Activated CD4-positive, alpha-beta T cell treated with anti-CD3 and anti-CD28 coated beads for 36 hours (primary cell): ENCODE measurements at regions of chr2 and their contacts with region 1.

Region 1: GRCh38 chr2:203238704-203239526 is at the start of gene CYP20A1:
- DNase-seq: peak; percentile 99
- ATAC-seq: peak; percentile 84
- H3K4me3 Mint-ChIP-seq: peak within 1 kb of the TSS; percentile 93
- H3K27ac Mint-ChIP-seq: peak within 1 kb of the TSS; percentile 100
- H3K4me1 Mint-ChIP-seq: peaks cover 30% of the 10 kb centered on the region
- H3K27me3 Mint-ChIP-seq: no peaks in the 10 kb centered on the region
- total RNA-seq, gene CYP20A1: 19.0 to 23.3 TPM

Region 2: DNA sequence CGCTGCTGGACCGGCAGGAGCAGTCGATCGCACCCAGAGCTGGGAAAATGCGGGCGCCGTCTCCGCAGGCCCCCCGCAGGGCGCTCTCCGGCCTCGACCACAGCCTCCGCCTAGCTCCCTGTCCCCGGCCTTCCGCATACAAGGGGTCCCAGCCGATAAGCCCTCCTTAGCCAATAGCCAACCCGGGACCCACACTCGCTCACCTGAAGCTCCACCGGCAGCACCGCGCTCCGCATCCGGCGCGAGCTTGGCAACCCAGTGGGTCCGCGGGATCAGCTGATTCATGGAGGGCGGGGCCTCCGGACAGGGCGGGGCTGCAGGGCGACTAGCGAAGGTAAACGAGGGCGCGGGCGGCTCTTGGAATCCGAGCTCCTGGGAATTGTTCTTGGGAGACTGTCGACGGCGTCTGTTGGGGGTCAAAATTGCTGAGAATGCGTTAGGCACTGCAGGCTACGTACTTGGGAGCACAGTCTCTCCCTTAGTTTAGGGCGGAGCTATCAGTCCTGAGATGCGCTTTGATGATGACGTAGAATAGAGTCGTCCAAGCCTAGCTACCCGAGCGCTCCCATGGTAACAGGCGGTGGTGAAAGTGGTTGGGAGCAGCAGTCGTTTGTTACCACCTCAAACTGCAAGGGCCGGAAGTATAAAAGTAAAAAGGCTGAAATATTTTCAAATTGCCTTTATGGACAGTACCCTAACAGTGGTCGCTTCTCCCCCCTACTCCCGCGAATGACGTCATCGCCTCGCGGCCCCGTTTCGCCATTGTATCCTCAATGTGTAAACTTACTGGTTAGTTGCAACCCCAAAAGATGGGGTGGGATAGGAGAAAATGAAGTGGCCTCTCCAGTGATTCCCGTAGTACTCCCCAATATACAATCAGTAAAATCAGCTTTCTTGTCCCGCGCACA is 1458.0 kb before region 1 on chr2 and contains the start of gene ALS2:
- CTCF ChIA-PET with region 1: no interaction called
- POLR2A ChIA-PET with region 1: no interaction called
- intact Hi-C with region 1: loop called in 1 of 2 experiments (anchors 2 kb)
- DNase-seq: peak; percentile 96
- ATAC-seq: peak; percentile 95
- H3K4me3 Mint-ChIP-seq: peak within 1 kb of the TSS; percentile 84
- H3K27ac Mint-ChIP-seq: peak within 1 kb of the TSS; percentile 92
- H3K4me1 Mint-ChIP-seq: peaks cover 25% of the 10 kb centered on the region
- H3K27me3 Mint-ChIP-seq: peaks cover 7% of the 10 kb centered on the region
- total RNA-seq, gene ALS2: 12.3 to 12.4 TPM

Region 3: DNA sequence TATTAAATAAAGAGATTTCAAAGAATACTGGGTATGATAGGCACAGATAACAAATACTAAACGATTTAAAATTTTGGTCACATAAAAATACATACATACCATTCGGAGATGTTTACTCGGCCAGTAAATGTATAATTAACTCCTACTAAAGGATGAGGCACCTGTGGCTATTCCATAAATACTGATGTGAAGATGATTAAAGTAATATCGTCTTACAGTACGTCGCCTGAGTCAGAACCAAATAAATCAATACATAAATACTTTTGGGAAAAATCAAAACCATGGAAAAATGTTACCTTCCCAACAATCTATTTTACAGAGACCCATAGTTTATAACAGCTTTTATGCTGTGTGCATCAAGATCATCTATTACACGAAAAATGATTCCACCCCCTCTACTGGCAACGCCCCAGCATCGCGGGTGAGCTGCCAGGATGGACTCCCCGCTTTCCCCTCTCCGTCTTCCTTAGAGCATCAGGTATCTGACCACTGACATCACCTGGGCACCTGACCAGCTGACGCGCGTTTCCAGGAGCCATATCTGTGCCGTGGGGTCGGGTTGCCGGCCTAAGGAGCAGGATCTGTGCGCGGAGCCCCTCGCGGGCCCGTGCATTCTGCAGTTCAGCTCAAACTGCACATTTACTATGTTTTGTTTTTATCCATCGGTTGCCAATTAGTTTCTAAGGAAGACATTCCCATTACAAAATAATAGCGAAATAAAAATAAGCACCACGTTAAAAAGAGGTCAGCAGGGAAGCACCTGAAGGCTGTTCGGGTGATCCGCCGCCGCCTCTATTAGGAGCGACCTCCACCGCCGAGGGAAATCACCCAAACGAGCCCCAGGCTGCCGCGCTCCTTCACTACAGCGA is 368.2 kb before region 1 on chr2:
- CTCF ChIA-PET with region 1: no interaction called
- POLR2A ChIA-PET with region 1: no interaction called
- intact Hi-C with region 1: loop called in 1 of 2 experiments (anchors 2 kb)
- DNase-seq: peak; percentile 83
- ATAC-seq: peak; percentile 78
- H3K4me3 Mint-ChIP-seq: peak overlapping the region; percentile 90
- H3K27ac Mint-ChIP-seq: peak overlapping the region; percentile 80
- H3K4me1 Mint-ChIP-seq: peaks cover 11% of the 10 kb centered on the region
- H3K27me3 Mint-ChIP-seq: no peaks in the 10 kb centered on the region

Region 4: GRCh38 chr2:202911512-202912341 is 327.2 kb before region 1 on chr2 and contains the starts of genes CARF and WDR12:
- CTCF ChIA-PET with region 1: no interaction called
- POLR2A ChIA-PET with region 1: interaction called, 4 read pairs
- intact Hi-C with region 1: loop called (anchors 1 kb)
- DNase-seq: peak; percentile 96
- ATAC-seq: peak; percentile 84
- H3K4me3 Mint-ChIP-seq: peak within 1 kb of the TSS; percentile 84
- H3K27ac Mint-ChIP-seq: peak within 1 kb of the TSS; percentile 95
- H3K4me1 Mint-ChIP-seq: peaks cover 30% of the 10 kb centered on the region
- H3K27me3 Mint-ChIP-seq: no peaks in the 10 kb centered on the region
- total RNA-seq, gene CARF: 6.2 to 9.0 TPM
- total RNA-seq, gene WDR12: 92.5 to 129 TPM

Region 5: GRCh38 chr2:203209538-203209937 is 29.4 kb before region 1 on chr2:
- CTCF ChIA-PET with region 1: no interaction called
- POLR2A ChIA-PET with region 1: no interaction called
- intact Hi-C with region 1: no loop called
- DNase-seq: no peak
- ATAC-seq: no peak
- H3K4me3 Mint-ChIP-seq: no peak overlapping the region
- H3K27ac Mint-ChIP-seq: no peak overlapping the region
- H3K4me1 Mint-ChIP-seq: peaks cover 6% of the 10 kb centered on the region
- H3K27me3 Mint-ChIP-seq: no peaks in the 10 kb centered on the region

Region 6: GRCh38 chr2:203310688-203311448 is 72.0 kb after region 1 on chr2:
- CTCF ChIA-PET with region 1: no interaction called
- POLR2A ChIA-PET with region 1: no interaction called
- intact Hi-C with region 1: no loop called
- DNase-seq: no peak
- ATAC-seq: no peak
- H3K4me3 Mint-ChIP-seq: no peak overlapping the region
- H3K27ac Mint-ChIP-seq: no peak overlapping the region
- H3K4me1 Mint-ChIP-seq: no peaks in the 10 kb centered on the region
- H3K27me3 Mint-ChIP-seq: no peaks in the 10 kb centered on the region

Region 7: DNA sequence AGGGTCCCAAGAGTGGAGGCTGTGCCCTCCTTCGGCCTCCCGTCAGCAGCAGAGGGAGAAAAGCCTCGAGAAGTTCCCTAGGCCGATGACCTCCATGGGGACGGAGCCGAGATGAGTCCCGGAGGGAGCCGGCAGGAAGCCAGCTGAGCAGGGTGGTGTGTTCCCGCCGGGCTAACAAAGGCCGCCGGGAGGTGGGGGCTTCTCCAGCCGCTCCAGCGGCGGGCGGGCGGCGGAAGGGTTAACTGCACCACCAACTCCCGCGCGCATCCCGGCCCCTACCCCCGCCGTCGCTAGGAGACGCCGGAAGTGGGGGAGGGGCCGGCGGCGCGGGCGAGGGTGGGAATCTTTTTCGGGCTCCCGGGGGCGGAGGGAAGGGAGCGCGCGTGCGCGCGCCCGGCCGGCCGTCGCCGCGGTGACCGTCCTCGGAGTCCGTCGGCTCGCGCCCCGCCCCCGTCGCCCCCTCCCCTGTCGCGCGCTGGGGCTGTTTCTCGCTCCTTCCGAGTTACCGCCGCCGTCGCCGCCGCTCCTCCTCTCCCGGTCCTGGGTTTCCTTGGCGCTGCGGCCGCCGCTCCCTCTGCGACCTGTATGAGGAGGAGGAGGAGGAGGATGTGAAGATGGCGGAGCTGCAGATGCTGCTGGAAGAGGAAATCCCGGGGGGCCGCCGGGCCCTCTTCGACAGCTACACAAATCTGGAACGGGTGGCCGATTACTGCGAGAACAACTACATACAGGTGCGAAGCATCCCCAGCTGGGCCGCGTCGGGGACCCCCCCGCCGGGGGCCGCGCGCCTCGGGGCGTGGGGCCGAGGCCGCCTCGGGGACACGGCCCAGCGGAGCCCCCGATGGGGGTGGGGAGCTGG is 89.2 kb after region 1 on chr2 and contains the start of gene ABI2:
- CTCF ChIA-PET with region 1: interaction called, 3 read pairs
- POLR2A ChIA-PET with region 1: no interaction called
- intact Hi-C with region 1: loop called (anchors 1 kb)
- DNase-seq: peak; percentile 77
- ATAC-seq: peak; percentile 52
- H3K4me3 Mint-ChIP-seq: peak within 1 kb of the TSS; percentile 91
- H3K27ac Mint-ChIP-seq: peak within 1 kb of the TSS; percentile 84
- H3K4me1 Mint-ChIP-seq: peaks cover 31% of the 10 kb centered on the region
- H3K27me3 Mint-ChIP-seq: no peaks in the 10 kb centered on the region
- total RNA-seq, gene ABI2: 40.6 to 57.6 TPM

Region 8: DNA sequence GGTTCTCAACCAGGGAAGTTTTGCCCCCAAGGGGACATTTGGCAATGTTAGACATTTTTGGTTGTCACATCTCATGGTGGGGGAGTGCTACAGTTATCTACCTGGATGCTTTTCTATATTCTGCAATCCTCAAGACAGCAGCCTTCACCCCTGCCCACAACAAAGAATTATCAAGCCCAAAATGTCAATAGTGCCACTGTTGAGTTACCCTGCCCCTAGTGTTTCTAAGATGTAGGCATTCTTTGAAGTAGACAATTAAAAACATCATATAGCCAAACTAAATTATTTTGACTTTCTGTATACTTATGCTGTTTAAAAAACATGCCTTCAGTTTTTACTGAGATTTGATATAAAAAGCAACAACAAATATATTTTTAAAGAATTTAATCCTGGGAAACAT is 137.3 kb after region 1 on chr2:
- CTCF ChIA-PET with region 1: no interaction called
- POLR2A ChIA-PET with region 1: interaction called, 11 read pairs
- intact Hi-C with region 1: no loop called
- DNase-seq: no peak
- ATAC-seq: no peak
- H3K4me3 Mint-ChIP-seq: no peak overlapping the region
- H3K27ac Mint-ChIP-seq: no peak overlapping the region
- H3K4me1 Mint-ChIP-seq: no peaks in the 10 kb centered on the region
- H3K27me3 Mint-ChIP-seq: no peaks in the 10 kb centered on the region

Region 9: GRCh38 chr2:203887677-203888076 is 648.8 kb after region 1 on chr2:
- CTCF ChIA-PET with region 1: no interaction called
- POLR2A ChIA-PET with region 1: no interaction called
- intact Hi-C with region 1: loop called in 1 of 2 experiments (anchors 10 kb)
- DNase-seq: no peak
- ATAC-seq: no peak
- H3K4me3 Mint-ChIP-seq: no peak overlapping the region
- H3K27ac Mint-ChIP-seq: peak overlapping the region; percentile 68
- H3K4me1 Mint-ChIP-seq: peaks cover 67% of the 10 kb centered on the region
- H3K27me3 Mint-ChIP-seq: peaks cover 4% of the 10 kb centered on the region